GM12878 (cell line): ENCODE measurements at regions of chr1 and their contacts with region 1.

Region 1: DNA sequence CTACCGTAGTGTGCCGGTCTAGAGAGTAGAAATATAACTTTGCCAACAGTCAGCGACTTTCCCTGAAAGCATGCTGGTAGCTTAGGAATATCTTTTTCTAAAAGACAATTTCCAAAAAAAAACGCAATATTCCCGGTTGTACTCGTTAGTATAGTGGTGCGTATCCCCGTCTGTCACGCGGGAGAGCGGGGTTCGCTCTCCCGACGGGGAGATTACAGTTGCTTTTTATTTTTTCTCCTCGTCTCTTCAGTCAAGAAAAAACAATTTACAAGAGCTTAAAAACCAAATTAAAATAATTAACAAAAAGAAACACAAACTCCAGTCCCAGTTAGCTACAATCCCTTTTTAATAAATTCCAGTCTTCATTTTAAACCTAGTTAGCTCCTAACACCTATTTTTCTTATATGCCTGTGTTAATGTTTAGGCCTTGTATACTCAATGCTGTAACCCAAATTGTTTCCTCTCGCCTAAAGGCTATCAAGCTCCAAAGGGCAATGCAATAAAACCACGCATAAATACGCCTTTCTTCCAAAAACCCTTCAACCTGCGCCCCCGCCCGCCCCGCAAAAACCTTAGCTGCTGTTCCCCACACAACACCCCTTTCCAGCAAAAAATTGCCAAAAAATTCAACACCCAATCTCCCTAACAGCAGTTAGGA is 7.8 kb downstream of the HSPA6 start:
- DNase-seq: no peak
- ATAC-seq: no peak
- H3K4me3 ChIP-seq: no peak overlapping the region
- H3K27ac ChIP-seq: no peak overlapping the region
- H3K4me1 ChIP-seq: no peaks in the 10 kb centered on the region; the same call in 1 of the 2 replicates
- H3K27me3 ChIP-seq: no peaks in the 10 kb centered on the region
- CTCF ChIP-seq: no peak
- EP300 ChIP-seq: no peak
- POLR2A ChIP-seq: no peak
- RAD21 ChIP-seq: no peak

Region 2: DNA sequence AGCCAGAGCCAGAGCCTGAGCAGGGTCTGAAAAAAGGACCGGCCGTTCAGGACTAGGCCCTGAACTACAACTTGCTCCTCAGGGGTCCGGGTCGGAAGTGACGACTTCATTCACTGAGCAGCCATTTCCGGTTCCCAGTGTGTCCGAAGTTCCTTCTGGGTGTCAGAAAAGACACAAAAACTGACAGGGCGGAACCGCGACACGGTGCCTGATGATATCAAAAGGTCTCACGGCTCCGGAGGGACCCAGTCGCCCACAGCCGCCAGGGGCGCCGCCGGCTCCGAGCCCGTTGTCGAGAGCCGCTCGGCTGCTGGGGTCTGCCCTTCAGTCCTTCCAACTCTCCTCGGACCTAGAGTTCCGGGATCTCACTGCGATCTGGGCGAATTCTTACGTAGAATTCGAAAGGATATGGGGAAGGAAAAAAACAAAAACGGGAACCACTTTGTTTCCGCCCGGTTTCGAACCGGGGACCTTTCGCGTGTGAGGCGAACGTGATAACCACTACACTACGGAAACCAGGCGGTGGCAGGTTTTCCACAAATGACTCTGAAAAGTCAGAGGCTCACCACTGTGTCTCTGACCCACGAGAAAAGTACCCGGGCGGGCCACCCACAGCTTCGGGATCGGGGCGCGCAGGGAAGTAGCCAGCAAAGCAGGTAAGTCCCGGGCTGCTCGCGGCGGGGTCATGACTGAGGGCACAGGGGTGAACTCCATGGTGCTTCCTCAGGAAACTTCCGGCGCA is 132.7 kb before region 1 on chr1:
- CTCF ChIA-PET with region 1: no interaction called
- POLR2A ChIA-PET with region 1: no interaction called
- RAD21 ChIA-PET with region 1: no interaction called
- SMC1A ChIA-PET with region 1: no interaction called
- in situ Hi-C with region 1: no loop called
- intact Hi-C with region 1: loop called (anchors 10 kb)
- DNase-seq: peak; percentile 80
- ATAC-seq: peak; percentile 89
- H3K4me3 ChIP-seq: peak overlapping the region; percentile 87
- H3K27ac ChIP-seq: peak overlapping the region; percentile 97
- H3K4me1 ChIP-seq: 0 out of 2 replicates have a peak, but pooled peaks cover 3% of the 10 kb centered on the region
- H3K27me3 ChIP-seq: no peaks in the 10 kb centered on the region
- CTCF ChIP-seq: peak; percentile 30 to 72 (median 66)
- EP300 ChIP-seq: peak in 1 of 2 experiments; percentile 78; a peak in 1 of 4 replicates
- POLR2A ChIP-seq: peak; percentile 90
- RAD21 ChIP-seq: no peak